ENCODE measurements at regions of chr7 and their contacts with region 1.

Region 1: DNA sequence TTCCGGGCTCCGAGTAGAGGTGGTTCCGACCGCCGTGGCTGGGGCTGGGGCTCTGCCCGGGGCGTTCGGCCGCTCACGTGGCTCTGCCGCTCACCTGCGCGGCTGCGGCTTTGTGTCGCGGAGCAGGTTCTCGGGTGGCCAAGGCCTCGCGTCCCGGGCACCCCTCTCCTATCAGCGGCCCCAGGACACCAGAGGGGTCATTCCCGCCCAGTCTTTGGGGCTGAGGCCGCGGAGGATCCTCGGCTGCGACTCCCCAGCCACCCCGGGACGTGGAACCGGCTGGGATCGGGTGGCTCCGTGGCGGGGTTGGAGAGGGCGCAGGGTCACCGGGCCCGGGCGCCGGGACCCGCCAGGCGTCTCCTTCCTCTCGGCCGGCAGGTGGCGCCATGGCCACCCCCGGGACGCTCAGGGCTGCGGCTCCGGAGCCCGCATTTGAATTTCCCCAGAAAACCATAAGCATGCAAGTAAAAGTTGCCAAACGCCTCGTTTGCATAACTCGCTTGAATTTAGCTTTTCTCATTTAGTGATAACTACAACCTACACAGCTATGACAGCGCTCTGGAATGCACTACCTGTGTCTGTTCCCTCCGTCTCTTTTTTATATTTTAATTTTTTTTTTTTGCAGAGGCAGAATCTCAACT is 1.2 kb downstream of the COL26A1 start:
- DNase-seq: peak; percentile 55
- ATAC-seq: peak; percentile 93
- H3K4me3 ChIP-seq: peak overlapping the region; percentile 60 to 84 (median 75); a peak in 5 of 6 replicates
- H3K27ac ChIP-seq: peak overlapping the region; percentile 66
- H3K4me1 ChIP-seq: peaks cover 23% of the 10 kb centered on the region
- H3K27me3 ChIP-seq: peaks cover 1 to 5% of the 10 kb centered on the region in 2 experiments; a peak in 3 of 5 replicates
- CTCF ChIP-seq: peak; percentile 86
- EP300 ChIP-seq: no peak
- POLR2A ChIP-seq: no peak
- RAD21 ChIP-seq: peak; percentile 95

Region 2: DNA sequence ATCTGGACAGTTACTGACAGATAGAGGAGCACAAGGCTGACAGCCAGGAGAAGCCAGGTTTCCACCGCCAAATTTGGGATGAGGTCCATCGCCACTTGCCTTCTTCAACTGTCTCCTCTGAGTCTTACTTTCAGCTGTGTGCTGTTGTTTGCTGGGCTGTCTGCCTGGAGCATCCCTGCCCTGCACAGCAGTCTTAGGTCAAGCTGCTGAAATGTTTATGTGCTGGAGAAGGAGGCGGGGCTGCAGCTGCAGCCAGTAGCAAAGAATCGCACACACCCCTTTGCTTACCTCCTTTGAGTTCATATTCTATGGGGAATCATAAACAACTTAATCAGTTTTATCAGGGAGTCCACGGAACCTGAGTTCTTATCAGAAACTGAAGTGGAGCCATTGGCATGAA is 1663.9 kb before region 1 on chr7:
- CTCF ChIA-PET with region 1: no interaction called
- POLR2A ChIA-PET with region 1: no interaction called
- in situ Hi-C with region 1: no loop called
- intact Hi-C with region 1: no loop called
- DNase-seq: no peak
- ATAC-seq: peak; percentile 49
- H3K4me3 ChIP-seq: no peak overlapping the region
- H3K27ac ChIP-seq: no peak overlapping the region
- H3K4me1 ChIP-seq: peaks cover 60% of the 10 kb centered on the region
- H3K27me3 ChIP-seq: no peaks in the 10 kb centered on the region
- CTCF ChIP-seq: no peak
- EP300 ChIP-seq: no peak
- POLR2A ChIP-seq: no peak
- RAD21 ChIP-seq: no peak

Region 3: GRCh38 chr7:101108330-101108857 is 255.5 kb before region 1 on chr7:
- CTCF ChIA-PET with region 1: no interaction called
- POLR2A ChIA-PET with region 1: no interaction called
- in situ Hi-C with region 1: no loop called
- intact Hi-C with region 1: no loop called
- DNase-seq: peak; percentile 69
- ATAC-seq: peak; percentile 84
- H3K4me3 ChIP-seq: peak overlapping the region in 2 of 3 experiments; percentile 19 to 51; a peak in 3 of 6 replicates
- H3K27ac ChIP-seq: peak overlapping the region; percentile 51
- H3K4me1 ChIP-seq: peaks cover 88% of the 10 kb centered on the region
- H3K27me3 ChIP-seq: 0 out of 5 replicates have a peak, but pooled peaks cover 0 to 3% of the 10 kb centered on the region in 2 experiments
- CTCF ChIP-seq: 0 out of 2 replicates have a peak, but pooled peaks have one; percentile 9
- EP300 ChIP-seq: no peak
- POLR2A ChIP-seq: peak in 1 of 2 experiments; percentile 31; a peak in 1 of 4 replicates
- RAD21 ChIP-seq: no peak

Region 4: GRCh38 chr7:101410743-101411507 is 47.1 kb after region 1 on chr7:
- CTCF ChIA-PET with region 1: interaction called, 20 read pairs
- POLR2A ChIA-PET with region 1: no interaction called
- in situ Hi-C with region 1: loop called (anchors 5 kb)
- intact Hi-C with region 1: loop called (anchors 1 kb)
- DNase-seq: peak; percentile 41
- ATAC-seq: peak; percentile 91
- H3K4me3 ChIP-seq: peak overlapping the region in 1 of 3 experiments; percentile 19; a peak in 1 of 6 replicates
- H3K27ac ChIP-seq: no peak overlapping the region
- H3K4me1 ChIP-seq: peaks cover 14% of the 10 kb centered on the region
- H3K27me3 ChIP-seq: no peaks in the 10 kb centered on the region
- CTCF ChIP-seq: peak; percentile 98
- EP300 ChIP-seq: no peak
- POLR2A ChIP-seq: no peak
- RAD21 ChIP-seq: peak; percentile 88

Region 5: GRCh38 chr7:101436857-101437576 is 73.2 kb after region 1 on chr7:
- CTCF ChIA-PET with region 1: interaction called, 10 read pairs
- POLR2A ChIA-PET with region 1: no interaction called
- in situ Hi-C with region 1: no loop called
- intact Hi-C with region 1: no loop called
- DNase-seq: no peak
- ATAC-seq: peak; percentile 42
- H3K4me3 ChIP-seq: no peak overlapping the region
- H3K27ac ChIP-seq: no peak overlapping the region
- H3K4me1 ChIP-seq: 0 out of 2 replicates have a peak, but pooled peaks cover 6% of the 10 kb centered on the region
- H3K27me3 ChIP-seq: no peaks in the 10 kb centered on the region
- CTCF ChIP-seq: no peak
- EP300 ChIP-seq: no peak
- POLR2A ChIP-seq: no peak
- RAD21 ChIP-seq: no peak

Region 6: GRCh38 chr7:101507791-101508252 is 144.0 kb after region 1 on chr7:
- CTCF ChIA-PET with region 1: interaction called, 12 read pairs
- POLR2A ChIA-PET with region 1: no interaction called
- in situ Hi-C with region 1: no loop called
- intact Hi-C with region 1: no loop called
- DNase-seq: peak; percentile 78
- ATAC-seq: peak; percentile 65
- H3K4me3 ChIP-seq: no peak overlapping the region
- H3K27ac ChIP-seq: no peak overlapping the region
- H3K4me1 ChIP-seq: peaks cover 28% of the 10 kb centered on the region
- H3K27me3 ChIP-seq: no peaks in the 10 kb centered on the region; a peak in 1 of 5 replicates
- CTCF ChIP-seq: peak; percentile 90
- EP300 ChIP-seq: 0 out of 4 replicates have a peak, but pooled peaks of 1 of the 2 experiments have one; percentile 21
- POLR2A ChIP-seq: no peak
- RAD21 ChIP-seq: peak; percentile 64; the same call in 1 of the 2 replicates